ENCODE measurements at regions of chr5 and their contacts with region 1.

Region 1: GRCh38 chr5:126449751-126450271 is 26.6 kb downstream of the GRAMD2B start:
- DNase-seq: peak; percentile 20 to 77 (median 48)
- ATAC-seq: peak; percentile 83 to 89 (median 86)
- H3K4me3 ChIP-seq: peak overlapping the region; percentile 46 to 49
- H3K4me3 Mint-ChIP-seq: peak overlapping the region; percentile 77 to 85 (median 85)
- H3K27ac ChIP-seq: peak overlapping the region; percentile 94
- H3K27ac Mint-ChIP-seq: peak overlapping the region; percentile 99 to 100
- H3K4me1 ChIP-seq: peaks cover 31 to 38% of the 10 kb centered on the region in 2 experiments
- H3K4me1 Mint-ChIP-seq: peaks cover 67 to 75% (median 73%) of the 10 kb centered on the region in 3 donors
- H3K27me3 ChIP-seq: no peaks in the 10 kb centered on the region
- H3K27me3 Mint-ChIP-seq: no peaks in the 10 kb centered on the region

Region 2: DNA sequence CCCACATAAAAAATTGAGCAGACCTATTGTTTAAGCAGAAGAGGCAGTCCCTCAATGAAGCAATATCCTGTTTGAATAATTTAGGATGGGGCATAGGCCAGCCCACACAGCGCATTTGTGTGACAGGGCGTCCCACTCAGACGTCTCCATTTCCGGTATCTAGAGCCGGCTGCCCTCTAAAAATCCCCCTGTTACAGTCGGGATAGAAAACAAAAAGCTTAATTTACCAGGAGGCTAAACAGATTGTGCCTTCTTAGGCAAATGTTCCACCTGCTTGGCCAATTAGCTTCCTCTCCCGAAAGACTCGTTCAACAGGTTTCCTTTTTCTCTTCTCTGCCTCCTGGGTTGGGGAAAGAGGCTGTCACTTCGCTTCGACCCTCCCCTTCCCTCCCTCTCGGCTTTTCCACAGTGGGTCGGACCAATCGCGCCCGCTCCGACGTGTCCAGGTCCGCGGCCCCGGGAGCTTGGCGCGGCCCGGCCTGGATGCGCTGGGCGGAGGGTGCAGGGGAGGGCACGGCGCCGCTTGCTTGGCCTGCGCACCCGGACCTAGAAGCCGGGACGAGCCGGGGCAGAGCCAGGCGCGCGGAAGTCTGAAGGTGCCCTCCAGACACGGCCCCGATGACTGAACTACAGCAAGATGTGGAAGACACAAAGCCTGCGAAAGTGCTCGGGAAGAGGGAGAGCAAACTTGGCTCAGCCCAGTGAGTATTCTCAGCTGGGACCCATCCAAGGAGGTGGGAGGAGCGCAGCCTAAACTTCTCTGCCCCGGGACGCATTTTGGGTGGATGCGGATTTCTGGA is 26.6 kb before region 1 on chr5 and contains the start of gene GRAMD2B:
- CTCF ChIA-PET with region 1: interaction called, 4 to 9 read pairs
- POLR2A ChIA-PET with region 1: interaction called, 9 to 38 read pairs
- DNase-seq: peak; percentile 36 to 84 (median 70)
- ATAC-seq: peak; percentile 93 to 95 (median 94)
- H3K4me3 ChIP-seq: peak within 1 kb of the TSS; percentile 82 to 94
- H3K4me3 Mint-ChIP-seq: peak within 1 kb of the TSS; percentile 85 to 88 (median 87)
- H3K27ac ChIP-seq: peak within 1 kb of the TSS; percentile 94
- H3K27ac Mint-ChIP-seq: peak within 1 kb of the TSS; percentile 83 to 91
- H3K4me1 ChIP-seq: peaks cover 9 to 11% of the 10 kb centered on the region in 2 experiments
- H3K4me1 Mint-ChIP-seq: peaks cover 33 to 38% (median 35%) of the 10 kb centered on the region in 3 donors
- H3K27me3 ChIP-seq: no peaks in the 10 kb centered on the region
- H3K27me3 Mint-ChIP-seq: no peaks in the 10 kb centered on the region
- total RNA-seq, gene GRAMD2B: 5.7 to 14.1 (median 6.0) TPM

Region 3: DNA sequence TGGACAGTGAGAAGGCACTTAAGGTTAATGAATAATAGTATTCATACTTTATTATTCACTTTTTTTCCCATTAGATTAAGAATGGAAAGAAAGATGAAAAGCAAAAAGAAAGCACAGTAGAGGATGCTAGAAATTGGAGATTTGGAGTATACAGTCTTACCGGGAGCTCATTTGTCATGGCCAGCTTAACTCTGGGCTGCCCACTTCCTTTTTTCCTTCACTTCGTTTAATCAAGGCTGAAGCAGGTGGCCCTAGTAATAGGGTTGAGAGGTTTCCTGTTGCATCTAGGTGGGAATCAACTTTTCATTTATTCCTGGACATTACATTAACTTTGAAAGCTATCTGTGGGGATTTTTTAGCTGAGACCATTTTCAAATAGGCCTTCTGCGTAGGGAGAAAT is 783.8 kb after region 1 on chr5:
- CTCF ChIA-PET with region 1: no interaction called
- POLR2A ChIA-PET with region 1: interaction called in 1 of 2 experiments, 16 read pairs
- DNase-seq: no peak
- ATAC-seq: no peak
- H3K4me3 ChIP-seq: no peak overlapping the region
- H3K4me3 Mint-ChIP-seq: no peak overlapping the region
- H3K27ac ChIP-seq: no peak overlapping the region
- H3K27ac Mint-ChIP-seq: no peak overlapping the region
- H3K4me1 ChIP-seq: peaks cover 2 to 11% of the 10 kb centered on the region in 2 experiments
- H3K4me1 Mint-ChIP-seq: peaks cover 18 to 19% (median 19%) of the 10 kb centered on the region in 3 donors
- H3K27me3 ChIP-seq: no peaks in the 10 kb centered on the region
- H3K27me3 Mint-ChIP-seq: no peaks in the 10 kb centered on the region

Measured in T-cell (primary cell).